SK-N-SH (cell line): ENCODE measurements at regions of chr12 and their contacts with region 1.

Region 1: DNA sequence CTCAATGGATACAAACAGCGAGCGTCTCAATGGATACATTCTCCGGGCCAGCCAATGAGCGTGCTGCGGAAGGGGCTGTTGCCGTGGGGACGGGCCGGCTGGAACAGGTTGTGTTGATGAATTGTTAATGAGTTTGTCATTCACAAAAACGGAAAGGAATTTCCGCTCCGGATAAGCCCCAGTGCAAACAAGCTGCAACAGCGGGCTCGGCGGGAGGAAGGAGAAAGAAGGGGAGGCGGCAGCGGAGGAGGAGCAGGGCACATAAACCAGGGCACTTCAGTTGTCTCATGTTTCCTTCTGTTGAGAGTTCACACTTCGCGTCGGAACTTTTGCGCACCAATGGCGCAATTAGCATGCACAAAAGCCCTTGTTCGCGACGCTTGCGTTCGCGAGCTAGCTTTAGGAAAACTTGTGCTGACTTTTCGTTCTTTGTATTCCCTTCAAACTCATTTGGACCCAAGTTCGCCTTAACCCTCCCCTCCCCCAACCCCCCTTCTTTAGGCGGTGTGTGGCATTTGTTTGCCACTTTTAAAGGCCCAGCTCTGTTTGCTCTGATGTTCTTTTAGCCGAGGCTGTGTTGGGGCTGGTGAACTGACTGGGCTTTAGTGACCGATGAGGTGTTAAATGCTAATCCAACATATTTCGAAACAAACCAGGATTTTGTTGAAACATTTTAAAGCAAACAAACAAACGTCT is at the start of gene DUSP6:
- DNase-seq: peak; percentile 93
- H3K4me3 ChIP-seq: peak within 1 kb of the TSS; percentile 94 to 99
- H3K27ac ChIP-seq: peak within 1 kb of the TSS; percentile 98 to 100
- H3K4me1 ChIP-seq: peaks cover 22 to 43% of the 10 kb centered on the region in 2 experiments; a peak in 3 of 4 replicates
- H3K27me3 ChIP-seq: no peaks in the 10 kb centered on the region
- CTCF ChIP-seq: no peak
- EP300 ChIP-seq: peak; percentile 75 to 78; a peak in 2 of 4 replicates
- RAD21 ChIP-seq: no peak
- polyA plus RNA-seq, gene DUSP6: 64.8 and 71.4 TPM in 2 replicates

Region 2: DNA sequence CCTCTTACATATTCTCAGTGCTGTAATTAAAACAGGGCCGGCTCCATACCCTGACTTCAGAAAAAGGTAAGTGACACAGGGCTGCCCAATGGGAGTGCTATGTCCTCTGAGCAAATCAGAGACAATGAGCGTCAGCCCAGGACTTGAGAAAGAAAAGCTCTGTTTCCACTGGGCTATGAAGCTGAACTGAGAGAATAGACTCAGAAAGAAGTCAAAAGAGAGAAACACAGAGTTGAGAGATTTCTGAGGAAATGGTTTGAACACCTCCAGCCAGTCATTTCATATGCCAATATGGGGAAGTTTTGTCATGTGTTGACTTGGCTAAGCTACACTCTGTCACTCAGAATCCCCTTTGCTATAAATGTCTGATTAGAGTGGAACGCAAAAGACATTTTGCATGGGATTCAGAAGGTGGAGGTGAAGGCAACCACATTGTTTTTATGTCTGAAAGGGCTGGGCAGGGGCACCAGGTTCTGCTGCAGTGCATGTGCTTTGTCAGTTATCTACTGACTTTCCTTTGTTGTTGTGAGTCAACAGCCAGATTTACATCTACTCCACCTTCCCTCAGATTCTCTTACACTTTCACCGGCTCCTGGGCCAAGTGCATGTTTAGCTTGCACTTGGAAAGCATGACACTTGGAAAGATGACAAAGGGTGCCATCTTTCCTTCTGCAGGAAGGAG is 313.7 kb before region 1 on chr12:
- CTCF ChIA-PET with region 1: no interaction called
- POLR2A ChIA-PET with region 1: interaction called, 11 read pairs
- DNase-seq: no peak
- H3K4me3 ChIP-seq: no peak overlapping the region
- H3K27ac ChIP-seq: peak overlapping the region in 1 of 2 experiments; percentile 67; a peak in 2 of 4 replicates
- H3K4me1 ChIP-seq: peaks cover 6 to 7% of the 10 kb centered on the region in 2 experiments; a peak in 2 of 4 replicates
- H3K27me3 ChIP-seq: no peaks in the 10 kb centered on the region
- CTCF ChIP-seq: no peak
- EP300 ChIP-seq: no peak
- RAD21 ChIP-seq: no peak

Region 3: DNA sequence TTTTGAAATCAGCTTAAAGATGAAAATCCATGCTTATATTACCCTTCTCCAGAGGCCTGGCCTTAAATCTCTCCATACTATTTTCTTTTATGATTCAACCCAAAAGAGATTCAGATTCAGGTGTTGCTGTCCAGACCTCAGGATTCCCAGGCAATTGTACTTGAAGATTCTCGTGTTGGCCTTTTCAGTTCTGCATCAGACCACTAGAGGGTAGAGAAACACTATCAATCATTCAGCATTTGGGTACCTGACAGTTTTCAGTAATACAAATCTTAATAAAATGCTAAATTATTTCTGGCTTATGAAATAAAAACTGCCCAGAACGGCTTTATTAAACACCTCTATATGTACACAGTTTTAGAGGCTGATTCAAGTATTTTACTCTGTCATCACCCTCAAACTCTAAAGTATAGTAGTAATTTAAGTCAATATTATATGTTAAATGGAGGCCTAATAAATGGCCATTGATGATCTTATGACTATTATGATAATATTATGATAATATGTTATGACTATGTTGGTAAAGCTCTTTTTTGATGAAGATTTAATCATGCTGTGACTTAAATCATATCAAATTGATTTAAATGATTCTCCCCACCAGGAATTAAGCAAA is 301.5 kb before region 1 on chr12:
- CTCF ChIA-PET with region 1: interaction called, 14 read pairs
- POLR2A ChIA-PET with region 1: interaction called, 3 read pairs
- DNase-seq: peak; percentile 61
- H3K4me3 ChIP-seq: no peak overlapping the region
- H3K27ac ChIP-seq: peak overlapping the region in 1 of 2 experiments; percentile 0; a peak in 2 of 4 replicates
- H3K4me1 ChIP-seq: peaks cover 3 to 10% of the 10 kb centered on the region in 2 experiments; a peak in 3 of 4 replicates
- H3K27me3 ChIP-seq: no peaks in the 10 kb centered on the region
- CTCF ChIP-seq: peak; percentile 93
- EP300 ChIP-seq: 0 out of 4 replicates have a peak, but pooled peaks of 1 of the 2 experiments have one; percentile 35
- RAD21 ChIP-seq: peak; percentile 99

Region 4: GRCh38 chr12:89389755-89390661 is 37.4 kb after region 1 on chr12:
- CTCF ChIA-PET with region 1: no interaction called
- POLR2A ChIA-PET with region 1: no interaction called
- DNase-seq: no peak
- H3K4me3 ChIP-seq: no peak overlapping the region
- H3K27ac ChIP-seq: peak overlapping the region; percentile 12 to 58; a peak in 3 of 4 replicates
- H3K4me1 ChIP-seq: peaks cover 16 to 31% of the 10 kb centered on the region in 2 experiments; a peak in 3 of 4 replicates
- H3K27me3 ChIP-seq: no peaks in the 10 kb centered on the region
- CTCF ChIP-seq: no peak
- EP300 ChIP-seq: no peak
- RAD21 ChIP-seq: no peak

Region 5: DNA sequence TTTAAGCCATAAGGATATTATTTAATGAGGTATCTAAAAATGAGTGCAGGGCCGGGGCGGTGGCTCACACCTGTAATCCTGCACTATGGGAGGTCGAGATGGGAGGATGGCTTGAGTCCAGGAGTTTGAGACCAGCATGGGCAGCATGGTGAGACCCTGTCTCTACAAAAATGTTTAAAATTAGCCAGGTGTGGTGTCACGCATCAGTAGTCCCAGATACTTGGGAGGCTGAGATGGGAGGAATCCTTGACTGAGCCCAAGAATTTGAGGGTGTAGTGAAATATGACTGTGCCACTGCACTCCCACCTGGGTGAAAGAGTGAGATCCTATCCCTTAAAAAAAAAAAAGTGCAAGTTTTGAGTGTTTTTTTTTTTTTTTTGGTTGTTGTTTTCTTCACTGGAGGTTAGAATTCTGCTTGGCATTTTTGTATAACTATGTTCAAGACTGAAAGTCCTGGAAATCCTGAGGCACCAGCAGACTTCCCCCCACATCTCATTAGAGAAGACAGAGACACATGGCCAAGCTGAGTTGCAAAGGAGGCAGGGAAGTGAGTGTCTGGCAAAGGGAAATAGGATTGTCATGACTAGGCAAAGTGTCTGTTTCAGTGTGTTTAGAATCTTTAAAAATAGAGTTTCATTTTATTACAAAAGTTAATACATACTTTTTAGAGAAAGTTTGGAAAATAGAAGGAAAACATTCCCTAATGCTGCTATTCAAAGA is 53.1 kb after region 1 on chr12:
- CTCF ChIA-PET with region 1: no interaction called
- POLR2A ChIA-PET with region 1: no interaction called
- DNase-seq: no peak
- H3K4me3 ChIP-seq: no peak overlapping the region
- H3K27ac ChIP-seq: no peak overlapping the region
- H3K4me1 ChIP-seq: no peaks in the 10 kb centered on the region
- H3K27me3 ChIP-seq: no peaks in the 10 kb centered on the region
- CTCF ChIP-seq: no peak
- EP300 ChIP-seq: no peak
- RAD21 ChIP-seq: no peak